SK-N-SH (cell line): ENCODE measurements at regions of chr14 and their contacts with region 1.

Region 1: DNA sequence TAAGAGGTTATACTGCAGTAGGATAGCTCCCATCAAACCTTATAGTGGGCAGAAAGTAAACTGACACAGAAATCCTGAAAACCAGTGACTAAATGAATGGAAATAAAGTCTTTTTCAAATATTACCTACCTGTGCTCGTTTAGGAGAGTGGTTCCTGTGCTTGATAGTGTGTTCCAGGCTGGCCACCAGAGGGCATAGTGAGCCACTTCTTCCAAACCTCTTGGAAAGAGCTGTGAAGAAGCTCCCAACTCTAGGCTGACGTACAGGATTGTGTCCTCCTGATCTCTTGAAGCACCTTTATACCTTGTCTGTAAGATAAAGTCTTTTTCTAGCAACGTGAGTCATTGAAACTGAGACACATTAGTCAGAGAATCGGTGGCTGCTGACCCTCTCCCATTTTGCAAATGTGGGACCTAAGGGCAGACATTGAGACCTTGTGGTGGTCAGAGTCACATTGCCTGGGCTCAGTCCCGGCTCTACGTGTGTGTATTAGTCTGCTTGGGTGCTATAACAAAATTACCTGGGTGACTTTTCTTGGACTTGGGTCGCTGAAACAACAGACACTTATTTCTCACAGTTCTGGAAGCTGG is 17.6 kb downstream of the TDP1 start:
- DNase-seq: peak; percentile 69
- H3K4me3 ChIP-seq: no peak overlapping the region; a peak in 1 of 4 replicates
- H3K27ac ChIP-seq: no peak overlapping the region
- H3K4me1 ChIP-seq: peaks cover 0 to 2% of the 10 kb centered on the region in 2 experiments; a peak in 1 of 4 replicates
- H3K27me3 ChIP-seq: no peaks in the 10 kb centered on the region
- CTCF ChIP-seq: peak; percentile 93
- EP300 ChIP-seq: no peak
- RAD21 ChIP-seq: peak; percentile 87

Region 2: DNA sequence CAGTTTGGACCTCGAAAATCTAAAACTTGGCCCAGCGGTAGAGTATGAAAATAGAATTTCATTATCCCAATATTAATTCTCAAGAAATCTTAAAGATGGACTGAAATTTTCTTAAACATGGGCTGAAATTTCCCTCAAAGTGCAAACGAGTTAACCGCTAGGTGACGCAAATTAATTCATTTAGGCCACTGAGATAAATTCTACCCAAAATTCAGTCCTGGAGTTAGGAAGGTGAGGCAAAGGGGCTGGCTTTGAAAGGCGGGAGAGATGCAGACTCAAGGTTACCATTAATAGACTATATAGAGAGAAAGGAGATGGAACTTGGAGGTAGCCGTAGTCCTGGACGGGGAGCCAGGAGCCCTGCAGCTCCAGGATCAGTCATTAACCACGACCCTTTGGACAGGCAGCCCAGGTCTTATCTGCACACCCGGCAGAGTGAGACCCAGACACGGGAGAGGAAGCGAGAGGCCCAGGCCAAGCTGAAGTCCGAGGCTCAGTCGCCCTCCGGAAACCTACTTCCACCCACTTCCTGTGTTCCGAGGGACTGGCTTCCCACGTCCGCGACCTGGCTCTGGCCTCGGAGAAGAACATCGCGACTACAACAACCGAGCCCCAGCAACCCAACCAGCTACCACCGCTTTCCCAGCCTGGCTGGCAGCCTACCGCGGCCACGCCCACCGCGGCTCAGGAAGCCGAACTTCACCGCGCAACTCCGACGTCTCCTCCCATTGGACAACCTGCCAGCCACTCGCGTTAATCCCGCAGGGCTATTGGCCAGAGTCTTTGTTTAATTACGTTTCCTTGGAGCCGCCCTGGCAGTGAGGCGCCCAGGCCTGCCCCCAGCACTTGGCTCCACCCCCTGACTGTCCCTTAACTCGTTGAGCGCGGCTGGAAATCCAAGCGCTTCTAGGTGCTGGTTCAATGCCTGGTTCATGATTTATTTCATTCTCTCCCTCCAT is 19.0 kb before region 1 on chr14 and contains the start of gene EFCAB11:
- CTCF ChIA-PET with region 1: interaction called, 112 read pairs
- POLR2A ChIA-PET with region 1: no interaction called
- DNase-seq: peak; percentile 92
- H3K4me3 ChIP-seq: peak within 1 kb of the TSS; percentile 76 to 89
- H3K27ac ChIP-seq: peak within 1 kb of the TSS; percentile 85 to 94
- H3K4me1 ChIP-seq: peaks cover 10 to 11% of the 10 kb centered on the region in 2 experiments; a peak in 3 of 4 replicates
- H3K27me3 ChIP-seq: no peaks in the 10 kb centered on the region
- CTCF ChIP-seq: peak; percentile 47
- EP300 ChIP-seq: no peak
- RAD21 ChIP-seq: no peak
- polyA plus RNA-seq, gene EFCAB11: 2.9 and 3.9 TPM in 2 replicates

Region 3: GRCh38 chr14:89992273-89992672 is 18.9 kb after region 1 on chr14:
- CTCF ChIA-PET with region 1: interaction called, 91 read pairs
- POLR2A ChIA-PET with region 1: no interaction called
- DNase-seq: no peak
- H3K4me3 ChIP-seq: no peak overlapping the region
- H3K27ac ChIP-seq: no peak overlapping the region
- H3K4me1 ChIP-seq: peaks cover 0 to 18% of the 10 kb centered on the region in 2 experiments; a peak in 2 of 4 replicates
- H3K27me3 ChIP-seq: no peaks in the 10 kb centered on the region
- CTCF ChIP-seq: no peak
- EP300 ChIP-seq: no peak
- RAD21 ChIP-seq: no peak

Region 4: GRCh38 chr14:90060312-90060964 is 87.1 kb after region 1 on chr14:
- CTCF ChIA-PET with region 1: interaction called, 24 read pairs
- POLR2A ChIA-PET with region 1: no interaction called
- DNase-seq: peak; percentile 92
- H3K4me3 ChIP-seq: peak overlapping the region; percentile 50 to 54
- H3K27ac ChIP-seq: no peak overlapping the region
- H3K4me1 ChIP-seq: peaks cover 0 to 16% of the 10 kb centered on the region in 2 experiments; a peak in 1 of 4 replicates
- H3K27me3 ChIP-seq: peaks cover 33% of the 10 kb centered on the region
- CTCF ChIP-seq: peak; percentile 55
- EP300 ChIP-seq: no peak
- RAD21 ChIP-seq: peak; percentile 56

Region 5: DNA sequence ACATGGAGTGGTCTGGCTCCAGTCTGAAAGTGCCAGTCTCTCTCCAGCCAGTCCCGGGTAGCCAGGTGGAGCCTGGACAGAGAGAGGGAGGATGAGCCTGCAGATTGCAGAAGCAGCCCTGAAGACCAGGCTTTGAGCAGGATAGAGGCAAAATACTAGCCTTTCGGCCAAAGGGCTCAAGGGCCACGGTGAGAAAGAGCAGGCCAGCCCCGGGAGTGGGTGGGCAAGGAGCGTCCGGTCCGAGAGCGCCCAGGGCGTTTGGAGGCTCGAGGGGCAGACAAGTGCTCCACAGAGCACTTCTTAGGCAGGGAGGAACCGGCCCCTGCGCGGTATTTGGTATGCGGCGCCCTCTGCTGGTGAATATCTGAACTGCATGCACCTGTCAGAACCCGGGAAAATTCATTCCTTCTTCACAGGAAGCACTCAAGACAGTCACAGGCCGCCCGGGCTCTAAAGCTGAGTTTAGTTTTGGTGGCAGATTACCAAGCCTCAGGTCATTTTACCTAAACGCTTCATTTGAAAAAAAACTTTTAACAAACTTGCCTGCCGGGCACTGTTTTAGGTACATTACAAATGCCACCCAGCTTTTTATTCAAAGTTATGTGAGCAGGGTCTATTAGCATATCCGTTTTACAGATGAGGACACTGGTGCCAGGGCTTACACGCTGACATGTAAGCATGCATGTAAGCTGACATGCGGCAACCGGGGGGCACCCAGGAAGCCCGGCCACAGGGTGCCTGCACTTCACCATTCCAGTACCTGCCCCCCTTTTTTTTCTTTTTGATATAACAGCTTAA is 262.0 kb after region 1 on chr14:
- CTCF ChIA-PET with region 1: interaction called, 222 read pairs
- POLR2A ChIA-PET with region 1: no interaction called
- DNase-seq: peak; percentile 80
- H3K4me3 ChIP-seq: no peak overlapping the region; a peak in 1 of 4 replicates
- H3K27ac ChIP-seq: no peak overlapping the region
- H3K4me1 ChIP-seq: peaks cover 0 to 4% of the 10 kb centered on the region in 2 experiments; a peak in 1 of 4 replicates
- H3K27me3 ChIP-seq: no peaks in the 10 kb centered on the region
- CTCF ChIP-seq: peak; percentile 82
- EP300 ChIP-seq: no peak
- RAD21 ChIP-seq: peak; percentile 93